Naive thymus-derived CD4-positive, alpha-beta T cell (primary cell): ENCODE measurements at regions of chr5 and their contacts with region 1.

Region 1: DNA sequence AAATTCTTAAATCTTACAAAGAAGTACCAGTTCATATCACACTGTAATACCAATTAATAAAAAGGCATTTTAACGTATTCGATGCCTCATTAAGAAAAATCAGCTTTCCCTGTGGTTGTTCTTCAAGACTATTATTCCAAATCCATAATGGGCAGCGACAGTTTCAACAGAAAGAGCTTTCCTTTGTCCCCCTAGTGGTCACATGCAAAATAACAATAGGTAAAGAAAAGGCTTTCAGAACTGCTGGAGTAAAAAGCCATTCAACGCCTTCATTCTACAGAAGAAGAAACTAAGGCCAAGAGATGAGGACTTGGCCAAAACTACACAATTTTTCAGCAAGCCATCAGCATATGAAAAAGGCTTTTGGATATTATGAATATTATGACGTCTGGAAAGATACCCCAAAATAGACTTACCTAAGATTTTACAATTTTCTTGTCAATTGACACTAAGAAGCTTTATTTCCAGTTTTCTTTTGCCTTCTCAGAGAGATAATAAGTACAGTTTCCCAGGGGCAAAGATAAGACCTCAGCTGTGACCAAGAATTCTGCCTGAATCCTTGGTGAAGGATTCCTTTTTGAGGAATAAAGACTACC is 6.7 kb upstream of the CDH6 start:
- DNase-seq: peak in 1 of 9 donors; percentile 9
- ATAC-seq: no peak
- H3K4me3 ChIP-seq: no peak overlapping the region
- H3K4me3 Mint-ChIP-seq: no peak overlapping the region
- H3K27ac ChIP-seq: no peak overlapping the region
- H3K27ac Mint-ChIP-seq: no peak overlapping the region
- H3K4me1 ChIP-seq: no peaks in the 10 kb centered on the region
- H3K4me1 Mint-ChIP-seq: no peaks in the 10 kb centered on the region
- H3K27me3 ChIP-seq: no peaks in the 10 kb centered on the region
- H3K27me3 Mint-ChIP-seq: peaks cover 2 to 13% (median 7%) of the 10 kb centered on the region in 5 donors

Region 2: GRCh38 chr5:30040488-30041118 is 1146.2 kb before region 1 on chr5:
- CTCF ChIA-PET with region 1: no interaction called
- POLR2A ChIA-PET with region 1: no interaction called
- intact Hi-C with region 1: loop called in 1 of 2 experiments (anchors 5 kb)
- DNase-seq: no peak
- ATAC-seq: no peak
- H3K4me3 ChIP-seq: no peak overlapping the region
- H3K4me3 Mint-ChIP-seq: no peak overlapping the region
- H3K27ac ChIP-seq: no peak overlapping the region
- H3K27ac Mint-ChIP-seq: no peak overlapping the region
- H3K4me1 ChIP-seq: no peaks in the 10 kb centered on the region
- H3K4me1 Mint-ChIP-seq: no peaks in the 10 kb centered on the region
- H3K27me3 ChIP-seq: no peaks in the 10 kb centered on the region
- H3K27me3 Mint-ChIP-seq: no peaks in the 10 kb centered on the region